Panc1 (cell line): ENCODE measurements at regions of chr19 and their contacts with region 1.

Region 1: DNA sequence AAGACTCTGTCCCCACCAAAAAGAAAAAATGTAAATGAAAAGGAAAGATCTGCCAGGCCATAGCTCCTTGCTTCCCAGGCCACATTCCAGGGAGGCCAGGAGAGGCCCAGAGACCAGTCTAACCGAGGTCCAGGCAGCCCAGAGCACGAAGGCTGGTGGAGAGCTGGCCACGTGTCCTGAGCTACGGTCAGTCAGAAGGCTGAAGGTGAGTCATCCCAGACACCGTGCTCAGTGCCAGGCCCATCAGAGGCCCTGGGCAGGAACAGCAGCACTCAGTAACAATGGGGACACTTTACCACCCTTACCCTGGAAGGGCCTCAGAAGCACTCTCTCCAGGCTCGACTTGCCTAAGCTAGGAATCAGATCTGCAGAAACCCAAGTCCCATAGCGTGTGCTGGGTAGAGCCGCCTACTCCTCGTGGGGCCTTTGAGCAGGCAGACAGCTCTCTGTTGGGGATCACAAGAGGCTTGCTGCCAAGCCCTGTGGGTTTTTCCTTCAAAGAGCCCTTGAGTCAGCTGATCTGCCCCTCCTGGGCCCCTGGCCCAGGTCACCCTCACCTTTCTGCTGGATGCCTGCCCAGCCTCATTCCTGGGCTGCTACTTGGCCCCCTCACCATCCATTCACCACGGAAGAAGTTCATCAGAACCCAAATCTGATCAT is 11.6 kb upstream of the DNMT1 start:
- DNase-seq: no peak
- ATAC-seq: peak; percentile 66
- H3K4me3 ChIP-seq: no peak overlapping the region
- H3K27ac ChIP-seq: no peak overlapping the region
- H3K4me1 ChIP-seq: no peaks in the 10 kb centered on the region
- H3K27me3 ChIP-seq: no peaks in the 10 kb centered on the region
- CTCF ChIP-seq: no peak

Region 2: GRCh38 chr19:9751446-9751845 is 454.9 kb before region 1 on chr19:
- CTCF ChIA-PET with region 1: no interaction called
- POLR2A ChIA-PET with region 1: no interaction called
- in situ Hi-C with region 1: no loop called
- intact Hi-C with region 1: no loop called
- DNase-seq: no peak
- ATAC-seq: no peak
- H3K4me3 ChIP-seq: no peak overlapping the region
- H3K27ac ChIP-seq: no peak overlapping the region
- H3K4me1 ChIP-seq: no peaks in the 10 kb centered on the region
- H3K27me3 ChIP-seq: no peaks in the 10 kb centered on the region
- CTCF ChIP-seq: no peak

Region 3: DNA sequence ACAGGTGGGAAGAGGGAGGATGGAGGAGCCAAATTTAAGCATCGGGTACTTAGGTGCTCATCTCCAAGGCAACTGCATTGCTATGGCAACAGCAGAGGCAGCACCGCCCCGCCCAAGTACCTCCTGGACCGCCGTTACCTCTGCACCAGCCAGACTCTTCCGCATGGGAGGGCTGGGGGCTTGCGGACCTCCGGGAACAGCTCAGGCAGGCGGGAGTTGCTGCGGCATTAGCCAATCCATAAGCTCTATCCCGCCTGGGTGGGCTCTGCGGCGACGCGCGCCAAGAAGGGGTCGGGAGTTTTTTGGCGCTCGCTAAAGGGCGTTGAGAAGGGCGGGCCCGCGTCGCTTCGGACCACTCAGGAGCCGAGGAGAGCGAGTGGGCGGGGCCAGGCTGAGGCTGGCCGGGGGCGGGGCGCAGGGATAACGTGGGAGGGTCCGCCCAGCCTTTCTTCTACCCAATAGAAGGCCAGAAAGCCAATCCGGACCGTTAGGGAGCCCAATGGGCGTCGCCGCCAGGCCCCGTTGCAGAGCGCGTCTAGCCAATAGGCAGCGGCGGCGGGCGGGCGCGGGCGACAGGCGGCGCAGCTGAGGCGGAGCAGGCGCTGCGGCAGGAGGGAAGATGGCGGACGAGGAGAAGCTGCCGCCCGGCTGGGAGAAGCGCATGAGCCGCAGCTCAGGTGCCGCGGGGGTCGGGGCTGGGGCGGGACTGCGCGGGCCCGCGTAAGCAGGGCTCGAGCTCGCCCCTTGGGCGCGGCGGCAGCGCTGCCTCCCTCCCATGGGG is 371.4 kb before region 1 on chr19 and contains the start of gene PIN1:
- CTCF ChIA-PET with region 1: interaction called, 13 read pairs
- POLR2A ChIA-PET with region 1: no interaction called
- in situ Hi-C with region 1: no loop called
- intact Hi-C with region 1: no loop called
- DNase-seq: peak; percentile 85
- ATAC-seq: peak; percentile 99
- H3K4me3 ChIP-seq: peak within 1 kb of the TSS; percentile 73 to 74
- H3K27ac ChIP-seq: peak within 1 kb of the TSS; percentile 70
- H3K4me1 ChIP-seq: 0 out of 2 replicates have a peak, but pooled peaks cover 4% of the 10 kb centered on the region
- H3K27me3 ChIP-seq: no peaks in the 10 kb centered on the region
- CTCF ChIP-seq: no peak; the same call in 1 of the 2 replicates
- total RNA-seq, gene PIN1: 102 TPM

Region 4: GRCh38 chr19:10036601-10037071 is 169.7 kb before region 1 on chr19:
- CTCF ChIA-PET with region 1: no interaction called
- POLR2A ChIA-PET with region 1: no interaction called
- in situ Hi-C with region 1: no loop called
- intact Hi-C with region 1: no loop called
- DNase-seq: no peak
- ATAC-seq: no peak
- H3K4me3 ChIP-seq: no peak overlapping the region
- H3K27ac ChIP-seq: no peak overlapping the region
- H3K4me1 ChIP-seq: peaks cover 5% of the 10 kb centered on the region; the same call in 1 of the 2 replicates
- H3K27me3 ChIP-seq: no peaks in the 10 kb centered on the region
- CTCF ChIP-seq: no peak

Region 5: GRCh38 chr19:10074153-10074552 is 132.2 kb before region 1 on chr19:
- CTCF ChIA-PET with region 1: no interaction called
- POLR2A ChIA-PET with region 1: no interaction called
- in situ Hi-C with region 1: no loop called
- intact Hi-C with region 1: no loop called
- DNase-seq: no peak
- ATAC-seq: peak; percentile 71
- H3K4me3 ChIP-seq: no peak overlapping the region
- H3K27ac ChIP-seq: no peak overlapping the region
- H3K4me1 ChIP-seq: no peaks in the 10 kb centered on the region
- H3K27me3 ChIP-seq: no peaks in the 10 kb centered on the region
- CTCF ChIP-seq: peak; percentile 66; the same call in 1 of the 2 replicates

Region 6: GRCh38 chr19:10194500-10195289 is 11.7 kb before region 1 on chr19 and contains the start of gene DNMT1:
- CTCF ChIA-PET with region 1: interaction called, 3 read pairs
- POLR2A ChIA-PET with region 1: interaction called, 10 read pairs
- in situ Hi-C with region 1: no loop called
- intact Hi-C with region 1: no loop called
- DNase-seq: peak; percentile 79
- ATAC-seq: peak; percentile 97
- H3K4me3 ChIP-seq: peak within 1 kb of the TSS; percentile 82 to 91
- H3K27ac ChIP-seq: peak within 1 kb of the TSS; percentile 94
- H3K4me1 ChIP-seq: peaks cover 21% of the 10 kb centered on the region; the same call in 1 of the 2 replicates
- H3K27me3 ChIP-seq: no peaks in the 10 kb centered on the region
- CTCF ChIP-seq: no peak
- total RNA-seq, gene DNMT1: 168 TPM

Region 7: DNA sequence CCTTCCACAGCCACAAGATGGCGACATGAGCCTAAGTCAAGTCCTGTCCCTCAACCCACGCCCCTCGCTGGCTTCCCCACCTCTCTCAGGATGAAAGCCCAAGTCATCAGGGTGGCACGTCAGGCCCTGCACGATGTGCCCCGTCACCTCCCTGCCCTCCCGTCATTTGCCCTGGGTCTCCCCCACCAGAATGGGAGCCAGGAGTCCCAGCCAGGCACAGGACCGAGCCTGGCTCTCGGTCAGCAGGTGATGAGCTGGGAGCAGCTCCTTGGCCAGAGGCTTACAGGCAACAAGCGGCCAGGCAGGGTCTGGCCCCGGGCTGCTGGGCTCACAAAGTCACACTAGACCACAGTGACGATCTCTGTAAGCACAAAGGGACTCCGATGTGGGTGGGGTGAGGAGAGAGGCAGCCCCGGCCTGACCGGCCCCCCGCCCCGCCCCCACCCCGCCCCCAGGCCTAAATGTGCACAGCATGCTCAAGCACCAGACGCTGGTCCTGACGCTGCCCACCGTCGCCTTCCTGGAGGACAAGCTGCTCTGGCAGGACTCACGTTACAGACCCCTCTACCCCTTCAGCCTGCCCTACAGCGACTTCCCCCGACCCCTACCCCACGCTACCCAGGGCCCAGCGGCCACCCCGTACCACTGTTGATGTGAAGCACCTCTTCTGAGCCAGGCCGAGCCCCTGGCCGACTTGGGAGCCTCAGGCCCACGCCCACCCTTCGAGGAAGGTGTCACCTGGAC is 53.0 kb after region 1 on chr19:
- CTCF ChIA-PET with region 1: no interaction called
- POLR2A ChIA-PET with region 1: no interaction called
- in situ Hi-C with region 1: no loop called
- intact Hi-C with region 1: no loop called
- DNase-seq: peak; percentile 46
- ATAC-seq: peak; percentile 75
- H3K4me3 ChIP-seq: no peak overlapping the region
- H3K27ac ChIP-seq: no peak overlapping the region
- H3K4me1 ChIP-seq: peaks cover 6% of the 10 kb centered on the region; the same call in 1 of the 2 replicates
- H3K27me3 ChIP-seq: no peaks in the 10 kb centered on the region
- CTCF ChIP-seq: peak; percentile 81; the same call in 1 of the 2 replicates